Astrocyte of the cerebellum (primary cell): ENCODE measurements at regions of chr17 and their contacts with region 1.

Region 1: GRCh38 chr17:39164675-39165143 is 1.3 kb downstream of the ARL5C start:
- DNase-seq: peak; percentile 79
- H3K4me3 ChIP-seq: peak overlapping the region; percentile 44
- CTCF ChIP-seq: peak; percentile 96

Region 2: DNA sequence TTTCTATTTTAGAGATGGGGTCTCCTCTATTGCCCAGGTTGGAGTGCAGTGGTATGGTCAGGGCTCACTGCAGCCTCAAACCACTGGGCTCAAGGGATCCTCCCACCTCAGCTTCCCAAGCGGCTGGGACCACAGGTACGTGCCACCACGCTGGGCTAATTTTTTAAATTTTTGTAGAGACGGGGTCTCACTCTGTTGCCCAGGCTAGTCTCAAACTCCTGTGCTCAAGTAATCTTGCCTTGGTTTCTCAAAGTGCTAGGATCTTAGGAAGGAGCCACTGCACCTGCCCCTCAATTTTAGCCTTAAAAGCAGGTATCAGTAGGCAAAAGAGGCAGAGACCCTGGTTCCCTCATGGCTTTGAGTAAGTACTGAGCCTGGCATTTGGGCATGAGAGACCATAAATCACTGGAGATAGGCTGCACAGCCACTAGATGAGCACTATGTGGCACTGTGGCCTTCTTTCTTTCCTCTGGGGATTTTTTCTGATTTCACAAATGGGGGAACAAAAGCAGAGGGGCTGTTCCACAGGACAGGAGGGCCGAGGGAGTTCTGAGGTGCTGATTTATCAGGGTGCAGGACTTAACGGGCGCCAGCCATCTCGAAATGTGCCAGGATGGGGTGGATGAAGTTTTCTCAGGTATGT is 95.5 kb before region 1 on chr17:
- in situ Hi-C with region 1: loop called (anchors 10 kb)
- DNase-seq: no peak
- H3K4me3 ChIP-seq: no peak overlapping the region
- CTCF ChIP-seq: peak; percentile 78

Region 3: GRCh38 chr17:39096508-39097149 is 68.1 kb before region 1 on chr17:
- in situ Hi-C with region 1: no loop called
- DNase-seq: no peak
- H3K4me3 ChIP-seq: no peak overlapping the region
- CTCF ChIP-seq: no peak

Region 4: GRCh38 chr17:39118674-39119419 is 45.9 kb before region 1 on chr17:
- in situ Hi-C with region 1: no loop called
- DNase-seq: no peak
- H3K4me3 ChIP-seq: no peak overlapping the region
- CTCF ChIP-seq: no peak